AG04449 (cell line): ENCODE measurements at regions of chr18 and their contacts with region 1.

Region 1: DNA sequence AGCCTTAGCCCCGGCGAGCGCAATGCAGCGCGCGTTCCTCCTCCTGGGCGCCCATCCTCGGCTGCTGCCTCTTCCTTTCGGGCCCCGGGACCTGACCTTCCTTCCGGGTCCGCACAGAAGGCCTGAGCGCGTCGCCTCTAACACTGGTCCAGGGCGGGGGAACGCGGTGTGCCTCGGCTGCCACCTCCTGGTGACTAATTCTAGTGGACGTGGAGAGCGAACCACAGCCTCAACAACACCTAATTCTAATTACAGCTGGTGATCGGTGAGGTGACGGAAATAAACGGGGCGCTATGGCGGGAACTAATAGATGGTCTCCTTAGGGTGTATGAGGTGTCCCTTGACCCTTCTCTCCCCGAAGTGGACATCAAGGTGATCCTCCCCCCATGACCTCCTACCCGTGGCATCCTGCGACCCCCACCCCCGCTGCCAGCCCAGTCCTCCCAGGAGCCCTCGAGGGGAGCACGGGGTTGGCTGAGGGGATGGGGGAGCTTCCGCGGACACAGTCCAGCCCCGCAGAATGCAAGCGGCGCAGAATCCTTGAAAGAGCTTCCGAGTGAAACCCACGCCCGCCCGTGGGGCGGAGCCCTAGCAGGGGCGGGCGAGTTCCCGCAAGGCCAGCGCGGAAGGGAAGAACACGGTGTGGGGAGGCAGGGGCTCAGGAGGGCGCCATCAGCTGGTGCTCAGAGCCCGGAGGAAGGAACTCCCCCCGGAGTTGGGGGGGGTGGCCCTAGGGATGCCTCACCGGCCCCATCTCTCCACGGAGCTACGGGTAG is 12.8 kb upstream of the HMSD start:
- DNase-seq: no peak
- H3K4me3 ChIP-seq: peak overlapping the region; percentile 70
- CTCF ChIP-seq: peak; percentile 84

Region 2: GRCh38 chr18:63848159-63848558 is 88.2 kb before region 1 on chr18:
- CTCF ChIA-PET with region 1: interaction called, 28 read pairs
- POLR2A ChIA-PET with region 1: no interaction called
- DNase-seq: no peak
- H3K4me3 ChIP-seq: no peak overlapping the region
- CTCF ChIP-seq: peak; percentile 57

Region 3: DNA sequence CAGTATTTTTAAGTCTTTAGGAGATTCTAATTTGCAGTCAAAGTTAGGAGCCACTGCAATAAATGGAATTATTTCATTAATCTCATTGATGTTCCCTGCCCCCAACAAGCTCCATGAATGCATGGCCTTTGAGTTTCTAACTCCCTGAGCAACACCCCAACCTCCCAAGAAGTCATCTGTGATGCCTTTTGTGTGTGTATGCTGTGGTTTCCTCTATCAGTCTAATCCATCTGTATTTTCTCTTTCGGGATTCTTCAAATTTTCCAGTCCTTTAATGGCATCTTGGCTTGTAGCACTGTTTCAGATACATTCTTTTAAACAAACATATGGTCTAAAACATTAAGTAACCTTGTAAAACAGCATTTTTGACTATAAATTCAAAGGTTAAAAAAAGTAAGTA is 11.8 kb before region 1 on chr18:
- CTCF ChIA-PET with region 1: interaction called, 26 read pairs
- POLR2A ChIA-PET with region 1: interaction called, 3 read pairs
- DNase-seq: peak; percentile 71
- H3K4me3 ChIP-seq: no peak overlapping the region
- CTCF ChIP-seq: no peak

Region 4: GRCh38 chr18:63963615-63964256 is 27.4 kb after region 1 on chr18:
- CTCF ChIA-PET with region 1: interaction called, 38 read pairs
- POLR2A ChIA-PET with region 1: no interaction called
- DNase-seq: no peak
- H3K4me3 ChIP-seq: no peak overlapping the region
- CTCF ChIP-seq: peak; percentile 81